T-cell (primary cell): ENCODE measurements at regions of chr1 and their contacts with region 1.

Region 1: DNA sequence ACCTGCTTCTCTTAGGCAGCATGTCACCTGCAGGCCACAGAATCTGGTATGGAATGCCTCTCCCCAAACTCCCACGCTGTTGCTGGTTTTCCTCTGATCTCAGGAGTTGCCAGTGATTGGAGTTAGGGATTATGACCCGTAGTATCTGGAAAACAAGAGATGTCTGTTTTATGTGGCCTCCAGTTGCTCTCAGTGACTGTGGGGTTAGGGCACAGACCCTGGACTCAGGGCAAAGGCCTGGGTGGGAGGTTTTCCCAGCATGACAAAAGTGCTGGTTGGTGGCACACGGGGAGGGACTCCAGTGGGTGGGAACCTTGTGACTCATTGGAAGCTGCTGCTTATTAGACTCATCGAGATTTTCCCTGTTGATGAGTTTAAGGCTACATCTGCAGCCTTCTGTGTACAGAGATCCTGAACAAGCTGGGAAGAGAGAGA is at the start of gene NR1I3:
- DNase-seq: no peak
- ATAC-seq: no peak
- H3K4me3 ChIP-seq: no peak within 1 kb of the TSS
- H3K4me3 Mint-ChIP-seq: no peak within 1 kb of the TSS
- H3K27ac ChIP-seq: no peak within 1 kb of the TSS
- H3K27ac Mint-ChIP-seq: no peak within 1 kb of the TSS
- H3K4me1 ChIP-seq: no peaks in the 10 kb centered on the region
- H3K4me1 Mint-ChIP-seq: no peaks in the 10 kb centered on the region
- H3K27me3 ChIP-seq: peaks cover 2 to 7% of the 10 kb centered on the region in 2 experiments
- H3K27me3 Mint-ChIP-seq: peaks cover 2 to 5% of the 10 kb centered on the region in 2 donors
- total RNA-seq, gene NR1I3: not detected

Region 2: GRCh38 chr1:161367684-161368400 is 129.8 kb after region 1 on chr1 and contains the start of gene CFAP126:
- CTCF ChIA-PET with region 1: interaction called in 1 of 2 experiments, 10 read pairs
- POLR2A ChIA-PET with region 1: no interaction called
- DNase-seq: peak in 32 of 35 experiments; percentile 9 to 77 (median 51)
- ATAC-seq: peak; percentile 89 to 100 (median 92)
- H3K4me3 ChIP-seq: no peak within 1 kb of the TSS
- H3K4me3 Mint-ChIP-seq: no peak within 1 kb of the TSS
- H3K27ac ChIP-seq: peak within 1 kb of the TSS; percentile 48
- H3K27ac Mint-ChIP-seq: peak within 1 kb of the TSS; percentile 60 to 68
- H3K4me1 ChIP-seq: no peaks in the 10 kb centered on the region
- H3K4me1 Mint-ChIP-seq: peaks cover 8 to 16% (median 8%) of the 10 kb centered on the region in 3 donors
- H3K27me3 ChIP-seq: no peaks in the 10 kb centered on the region
- H3K27me3 Mint-ChIP-seq: no peaks in the 10 kb centered on the region
- total RNA-seq, gene CFAP126: not detected